Sigmoid colon (tissue), 7 donors: ENCODE measurements at regions of chr12 and their contacts with region 1.

Region 1: GRCh38 chr12:93378373-93379325 is 924 bp downstream of the NUDT4 start:
- DNase-seq: peak; percentile 73
- H3K4me3 ChIP-seq: peak overlapping the region; percentile 74 to 93 (median 80)
- H3K27ac ChIP-seq: peak overlapping the region; percentile 94 to 97 (median 96)
- H3K4me1 ChIP-seq: peaks cover 4 to 50% (median 28%) of the 10 kb centered on the region in 4 donors
- H3K27me3 ChIP-seq: no peaks in the 10 kb centered on the region
- CTCF ChIP-seq: no peak
- EP300 ChIP-seq: no peak
- POLR2A ChIP-seq: no peak

Region 2: GRCh38 chr12:92928962-92929915 is 449.4 kb before region 1 on chr12 and contains the start of gene EEA1:
- intact Hi-C with region 1: loop called (anchors 10 kb)
- DNase-seq: peak; percentile 98
- H3K4me3 ChIP-seq: peak within 1 kb of the TSS; percentile 70 to 99 (median 83)
- H3K27ac ChIP-seq: peak within 1 kb of the TSS; percentile 98 to 100 (median 99)
- H3K4me1 ChIP-seq: peaks cover 0 to 35% (median 23%) of the 10 kb centered on the region in 4 donors
- H3K27me3 ChIP-seq: no peaks in the 10 kb centered on the region
- CTCF ChIP-seq: no peak
- EP300 ChIP-seq: peak in 1 of 4 donors; percentile 3
- POLR2A ChIP-seq: peak; percentile 43 to 89
- total RNA-seq, gene EEA1: 17.9 to 40.2 (median 23.3) TPM

Region 3: GRCh38 chr12:92987362-92987761 is 391.3 kb before region 1 on chr12:
- intact Hi-C with region 1: loop called (anchors 5 kb)
- DNase-seq: no peak
- H3K4me3 ChIP-seq: peak overlapping the region in 1 of 4 donors; percentile 13
- H3K27ac ChIP-seq: peak overlapping the region in 1 of 4 donors; percentile 6
- H3K4me1 ChIP-seq: peaks cover 0 to 7% (median 3%) of the 10 kb centered on the region in 4 donors
- H3K27me3 ChIP-seq: no peaks in the 10 kb centered on the region
- CTCF ChIP-seq: peak; percentile 38 to 73 (median 62)
- EP300 ChIP-seq: no peak
- POLR2A ChIP-seq: no peak

Region 4: GRCh38 chr12:93100610-93101009 is 278.0 kb before region 1 on chr12:
- intact Hi-C with region 1: loop called (anchors 5 kb)
- DNase-seq: no peak
- H3K4me3 ChIP-seq: no peak overlapping the region
- H3K27ac ChIP-seq: no peak overlapping the region
- H3K4me1 ChIP-seq: peaks cover 0 to 26% (median 24%) of the 10 kb centered on the region in 4 donors
- H3K27me3 ChIP-seq: no peaks in the 10 kb centered on the region
- CTCF ChIP-seq: no peak
- EP300 ChIP-seq: no peak
- POLR2A ChIP-seq: no peak

Region 5: DNA sequence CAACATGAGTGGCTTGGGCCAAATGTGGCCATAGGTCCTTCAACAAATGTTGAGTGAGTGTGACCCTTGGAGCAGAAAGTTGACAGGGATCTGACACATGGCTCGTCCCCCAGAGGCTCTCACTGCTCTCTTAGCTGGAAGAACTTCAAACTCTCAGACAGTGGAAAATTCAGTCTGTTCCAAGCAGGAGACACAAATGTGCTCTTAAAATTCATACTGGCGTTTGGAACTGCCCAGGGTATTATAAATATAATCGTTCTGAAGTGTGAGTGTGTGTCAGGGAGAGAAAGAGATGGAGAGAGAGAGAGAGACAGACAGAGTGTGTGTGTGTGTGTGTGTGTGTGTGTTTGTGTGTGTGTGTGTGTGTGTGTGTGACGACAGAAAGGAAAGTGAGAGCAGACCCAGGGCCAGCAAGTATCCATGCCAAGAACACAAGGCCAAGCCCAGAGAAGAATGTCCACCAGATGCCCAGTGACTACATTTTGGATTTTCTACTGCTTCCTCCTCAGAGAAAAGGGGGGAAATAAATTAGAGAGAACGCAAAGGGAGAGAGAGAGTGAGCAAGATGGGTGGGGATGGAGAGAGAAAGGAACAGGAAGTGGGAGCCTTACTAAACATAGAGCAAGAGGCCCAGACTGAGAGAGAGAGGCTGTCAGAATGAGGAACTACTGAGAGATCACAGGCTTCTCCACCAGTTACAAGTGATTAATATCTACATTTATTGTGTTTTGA is 194.5 kb before region 1 on chr12:
- intact Hi-C with region 1: loop called (anchors 5 kb)
- DNase-seq: peak; percentile 85
- H3K4me3 ChIP-seq: no peak overlapping the region
- H3K27ac ChIP-seq: peak overlapping the region; percentile 70 to 81 (median 78)
- H3K4me1 ChIP-seq: peaks cover 0 to 38% (median 34%) of the 10 kb centered on the region in 4 donors
- H3K27me3 ChIP-seq: no peaks in the 10 kb centered on the region
- CTCF ChIP-seq: no peak
- EP300 ChIP-seq: peak in 3 of 4 donors; percentile 33 to 48 (median 37)
- POLR2A ChIP-seq: no peak

Region 6: DNA sequence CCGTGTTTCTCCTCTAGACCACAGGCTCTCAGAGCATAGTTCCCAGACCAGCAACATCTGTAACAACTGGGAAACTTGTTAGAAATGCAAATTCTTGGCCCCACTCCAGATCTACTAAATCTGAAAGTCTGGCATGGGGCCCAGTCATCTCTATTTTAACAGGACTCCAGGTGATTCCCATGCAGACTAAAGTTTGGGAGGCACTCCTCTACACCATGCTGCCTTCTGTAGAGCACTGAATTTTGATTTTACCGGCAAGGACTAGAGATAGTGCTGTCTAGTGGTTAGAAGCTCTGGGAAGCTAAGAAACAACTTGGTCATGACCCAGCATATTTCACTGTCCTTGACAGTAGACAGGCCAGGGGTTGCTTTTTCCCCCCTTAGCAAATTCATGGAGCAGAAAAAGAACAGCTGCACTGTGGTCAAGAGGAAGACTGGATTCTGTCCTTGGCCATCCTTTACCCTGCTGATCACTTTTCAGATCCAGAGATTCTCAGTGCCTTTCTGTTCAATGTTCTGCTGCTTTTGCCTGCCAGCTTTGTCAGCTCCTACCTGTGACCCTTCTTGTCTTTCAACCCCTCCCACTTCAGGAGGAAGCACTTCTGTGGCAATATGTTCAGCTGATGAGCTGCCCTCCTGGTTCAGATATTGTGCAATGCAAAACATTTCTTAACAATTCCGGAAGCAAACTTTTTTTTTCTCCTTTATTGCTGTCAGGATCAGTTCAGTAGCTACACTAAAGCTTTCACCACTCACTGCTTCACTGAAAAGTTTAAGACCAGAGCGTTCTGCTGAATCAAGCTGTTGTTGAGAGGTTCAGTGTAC is 134.7 kb before region 1 on chr12:
- intact Hi-C with region 1: no loop called
- DNase-seq: peak; percentile 73
- H3K4me3 ChIP-seq: no peak overlapping the region
- H3K27ac ChIP-seq: peak overlapping the region; percentile 4 to 56 (median 37)
- H3K4me1 ChIP-seq: peaks cover 0 to 19% (median 17%) of the 10 kb centered on the region in 4 donors
- H3K27me3 ChIP-seq: no peaks in the 10 kb centered on the region
- CTCF ChIP-seq: no peak
- EP300 ChIP-seq: no peak
- POLR2A ChIP-seq: no peak

Region 7: GRCh38 chr12:93322784-93323183 is 55.9 kb before region 1 on chr12:
- intact Hi-C with region 1: no loop called
- DNase-seq: no peak
- H3K4me3 ChIP-seq: no peak overlapping the region
- H3K27ac ChIP-seq: no peak overlapping the region
- H3K4me1 ChIP-seq: peaks cover 0 to 7% (median 3%) of the 10 kb centered on the region in 4 donors
- H3K27me3 ChIP-seq: no peaks in the 10 kb centered on the region
- CTCF ChIP-seq: no peak
- EP300 ChIP-seq: no peak
- POLR2A ChIP-seq: no peak

Region 8: DNA sequence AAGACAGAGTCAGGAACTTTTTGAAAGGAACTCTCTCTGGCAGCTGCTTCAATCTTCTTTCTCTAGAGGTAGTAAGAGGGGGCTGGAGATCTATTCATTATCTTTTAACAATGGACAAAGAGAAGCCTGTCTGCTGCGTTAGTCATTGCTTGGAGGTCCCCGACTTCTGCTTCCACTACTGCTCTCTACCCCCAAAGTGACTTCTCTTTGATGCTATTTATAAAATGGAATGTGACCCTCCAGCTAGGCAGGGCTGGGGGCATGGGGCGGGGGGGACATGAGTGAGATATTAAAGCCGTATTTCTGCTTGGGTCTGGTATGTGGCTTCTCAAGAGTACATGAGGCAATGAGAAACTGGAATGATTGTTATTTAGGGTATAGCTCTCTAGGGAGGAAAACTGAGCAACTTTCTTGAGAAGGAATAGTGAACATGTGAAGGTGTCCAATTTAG is 42.3 kb before region 1 on chr12:
- intact Hi-C with region 1: no loop called
- DNase-seq: no peak
- H3K4me3 ChIP-seq: no peak overlapping the region
- H3K27ac ChIP-seq: no peak overlapping the region
- H3K4me1 ChIP-seq: no peaks in the 10 kb centered on the region
- H3K27me3 ChIP-seq: no peaks in the 10 kb centered on the region
- CTCF ChIP-seq: no peak
- EP300 ChIP-seq: no peak
- POLR2A ChIP-seq: no peak